Activated CD4-positive, alpha-beta T cell treated with anti-CD3 and anti-CD28 coated beads, Interleukin-2, amount 10 ng/mL, durations not matched to agents 24 days and 14 days (primary cell): ENCODE measurements at regions of chr14 and their contacts with region 1.

Region 1: DNA sequence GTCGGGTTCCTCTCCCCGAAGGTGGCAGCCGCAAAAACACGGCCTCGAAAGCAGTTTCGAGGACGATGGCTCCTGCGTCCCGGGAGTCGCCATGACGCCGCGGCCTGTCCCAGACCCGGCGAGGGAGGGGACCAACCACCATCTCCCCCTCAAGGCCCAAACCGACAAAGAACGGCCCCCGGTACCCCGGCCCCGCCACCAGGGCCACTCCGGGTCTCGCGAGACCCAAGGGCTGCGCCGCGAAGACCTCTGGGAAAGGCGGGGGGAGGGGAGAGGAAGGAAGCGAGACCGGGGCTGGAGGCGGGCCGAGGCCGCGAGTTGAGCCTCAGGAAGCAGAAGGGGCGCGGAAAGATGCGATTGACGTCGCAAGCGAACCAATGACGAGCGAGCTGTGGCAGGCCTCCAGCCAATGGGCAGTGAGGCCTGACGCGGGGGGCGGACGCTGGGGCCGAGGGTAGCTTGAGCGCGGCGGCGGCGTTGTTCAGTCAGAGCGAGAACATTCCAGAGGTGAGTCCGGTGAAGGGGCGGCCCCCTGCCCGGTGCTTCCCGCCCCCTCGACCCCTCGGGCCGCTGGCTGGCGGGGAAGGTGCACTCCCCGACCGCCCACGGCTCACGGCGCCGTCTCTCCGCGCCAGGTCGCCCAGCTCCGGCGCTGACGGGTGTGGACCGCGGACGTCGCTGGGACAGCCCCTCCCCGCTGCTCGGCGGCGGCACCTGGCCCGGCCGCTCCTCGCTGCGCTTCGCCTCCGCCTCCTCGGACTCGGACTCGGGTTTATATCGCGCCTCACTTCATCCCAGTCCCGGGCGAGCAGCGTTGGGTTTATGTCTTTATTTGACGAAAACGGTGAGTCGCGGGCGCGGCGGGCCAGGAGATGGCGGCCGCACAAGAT is at the start of gene EIF5:
- DNase-seq: peak; percentile 100
- H3K4me3 Mint-ChIP-seq: peak within 1 kb of the TSS; percentile 92
- H3K27ac Mint-ChIP-seq: peak within 1 kb of the TSS; percentile 98
- H3K4me1 Mint-ChIP-seq: peaks cover 37% of the 10 kb centered on the region
- H3K27me3 Mint-ChIP-seq: peaks cover 2% of the 10 kb centered on the region
- total RNA-seq, gene EIF5: 258 and 260 TPM in 2 replicates

Region 2: DNA sequence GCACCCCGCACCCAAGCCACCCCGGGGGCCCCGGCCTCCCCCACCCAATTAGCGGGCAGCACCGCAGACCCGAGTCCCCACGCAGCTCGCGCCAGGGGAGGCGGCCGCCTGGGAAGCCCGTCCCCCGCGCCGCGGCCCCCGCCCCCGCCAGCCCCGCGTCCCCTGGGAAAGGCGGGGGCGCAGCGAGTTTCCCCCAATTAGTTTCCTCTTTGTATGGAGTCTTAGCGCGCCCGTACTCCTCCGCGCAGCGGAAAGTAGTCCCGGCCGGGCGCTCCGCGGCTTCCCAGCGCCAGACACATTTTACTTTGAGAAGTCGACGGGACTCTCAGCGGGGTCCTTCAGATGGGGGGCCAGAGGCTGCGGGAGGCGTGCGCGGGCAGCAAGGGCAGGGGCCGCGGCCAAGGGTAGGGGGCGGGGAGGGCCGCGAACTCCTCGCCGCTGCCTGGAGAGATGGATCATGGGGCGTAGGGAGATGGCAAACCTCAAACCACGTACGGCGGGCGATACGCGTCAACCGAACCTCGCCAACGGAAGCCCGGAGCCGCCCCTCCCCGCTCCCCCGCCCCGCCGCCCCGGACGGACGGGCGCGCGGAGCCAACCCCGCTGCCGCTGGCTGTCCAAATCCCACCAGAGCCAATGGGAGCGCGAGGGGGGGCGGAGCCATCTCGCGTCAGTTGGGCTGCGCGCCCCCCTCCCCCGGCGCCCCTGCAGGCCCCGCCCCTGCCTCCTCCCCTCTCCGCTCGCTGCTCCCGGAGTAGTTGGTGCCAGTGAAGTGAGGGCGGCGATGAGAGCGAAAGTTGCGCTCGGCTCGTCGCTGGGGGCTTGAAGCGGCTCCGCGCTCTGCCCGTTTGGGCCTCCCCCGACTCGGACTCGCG is 741.9 kb before region 1 on chr14 and contains the start of gene RCOR1:
- intact Hi-C with region 1: loop called (anchors 2 kb)
- DNase-seq: peak; percentile 99
- H3K4me3 Mint-ChIP-seq: peak within 1 kb of the TSS; percentile 94
- H3K27ac Mint-ChIP-seq: peak within 1 kb of the TSS; percentile 95
- H3K4me1 Mint-ChIP-seq: peaks cover 23% of the 10 kb centered on the region
- H3K27me3 Mint-ChIP-seq: peaks cover 4% of the 10 kb centered on the region
- total RNA-seq, gene RCOR1: 21.8 and 24.0 TPM in 2 replicates

Region 3: GRCh38 chr14:102645746-102646440 is 688.1 kb before region 1 on chr14:
- intact Hi-C with region 1: no loop called
- DNase-seq: no peak
- H3K4me3 Mint-ChIP-seq: no peak overlapping the region
- H3K27ac Mint-ChIP-seq: peak overlapping the region; percentile 1
- H3K4me1 Mint-ChIP-seq: peaks cover 36% of the 10 kb centered on the region
- H3K27me3 Mint-ChIP-seq: no peaks in the 10 kb centered on the region

Region 4: GRCh38 chr14:103385152-103385993 is 51.4 kb after region 1 on chr14 and contains the start of gene MARK3:
- intact Hi-C with region 1: loop called (anchors 1 kb)
- DNase-seq: peak; percentile 99
- H3K4me3 Mint-ChIP-seq: peak within 1 kb of the TSS; percentile 94
- H3K27ac Mint-ChIP-seq: peak within 1 kb of the TSS; percentile 96
- H3K4me1 Mint-ChIP-seq: peaks cover 33% of the 10 kb centered on the region
- H3K27me3 Mint-ChIP-seq: peaks cover 6% of the 10 kb centered on the region
- total RNA-seq, gene MARK3: 82.0 and 89.7 TPM in 2 replicates

Region 5: DNA sequence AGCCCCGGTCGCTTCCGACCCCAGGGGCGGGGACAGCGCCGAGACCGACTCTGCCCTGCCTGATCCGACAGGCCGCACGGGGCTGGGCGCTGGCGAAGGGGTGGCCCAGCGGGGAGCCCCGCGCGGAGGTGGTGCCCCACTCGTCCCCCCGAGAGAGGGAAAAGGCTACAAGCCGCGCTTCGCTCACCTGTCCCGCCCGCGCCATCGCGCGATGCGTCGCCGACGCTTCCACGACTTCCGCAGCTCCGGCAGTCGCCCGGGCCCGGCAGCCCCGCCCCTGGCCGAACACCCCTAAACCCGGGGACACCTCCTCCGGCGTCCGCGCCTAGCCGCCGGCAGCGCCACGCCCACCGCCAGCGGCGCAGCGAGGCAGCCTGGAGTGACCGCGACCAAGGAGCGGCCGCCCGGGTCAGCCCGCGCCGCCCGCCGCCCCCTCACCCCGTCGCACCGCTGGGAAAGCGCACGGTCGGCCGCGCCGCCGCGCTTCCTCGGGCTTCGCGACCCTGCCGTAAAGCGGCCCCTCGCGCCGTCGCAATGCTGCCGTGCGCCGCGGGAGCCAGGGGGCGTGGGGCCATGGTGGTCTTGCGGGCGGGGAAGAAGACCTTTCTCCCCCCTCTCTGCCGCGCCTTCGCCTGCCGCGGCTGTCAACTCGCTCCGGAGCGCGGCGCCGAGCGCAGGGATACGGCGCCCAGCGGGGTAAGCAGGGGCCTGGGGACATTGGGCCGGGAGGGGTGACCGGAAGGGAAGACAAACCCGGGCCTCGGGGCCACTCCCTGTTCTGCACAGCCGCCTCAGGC is 228.6 kb after region 1 on chr14 and contains the starts of genes BAG5 and COA8:
- intact Hi-C with region 1: loop called (anchors 1 kb)
- DNase-seq: peak; percentile 96
- H3K4me3 Mint-ChIP-seq: peak within 1 kb of the TSS; percentile 100
- H3K27ac Mint-ChIP-seq: peak within 1 kb of the TSS; percentile 91
- H3K4me1 Mint-ChIP-seq: peaks cover 41% of the 10 kb centered on the region
- H3K27me3 Mint-ChIP-seq: no peaks in the 10 kb centered on the region
- total RNA-seq, gene BAG5: 32.1 and 33.9 TPM in 2 replicates
- total RNA-seq, gene COA8: 38.4 and 41.2 TPM in 2 replicates